IMR-90 (cell line): ENCODE measurements at regions of chr1 and their contacts with region 1.

Region 1: GRCh38 chr1:164617377-164618201 is 58.6 kb downstream of the PBX1 start:
- DNase-seq: peak; percentile 42
- ATAC-seq: peak; percentile 72
- H3K4me3 ChIP-seq: no peak overlapping the region
- H3K27ac ChIP-seq: no peak overlapping the region
- H3K4me1 ChIP-seq: peaks cover 13% of the 10 kb centered on the region; the same call in 1 of the 2 replicates
- H3K27me3 ChIP-seq: no peaks in the 10 kb centered on the region
- CTCF ChIP-seq: peak; percentile 63
- POLR2A ChIP-seq: no peak
- RAD21 ChIP-seq: peak; percentile 86

Region 2: DNA sequence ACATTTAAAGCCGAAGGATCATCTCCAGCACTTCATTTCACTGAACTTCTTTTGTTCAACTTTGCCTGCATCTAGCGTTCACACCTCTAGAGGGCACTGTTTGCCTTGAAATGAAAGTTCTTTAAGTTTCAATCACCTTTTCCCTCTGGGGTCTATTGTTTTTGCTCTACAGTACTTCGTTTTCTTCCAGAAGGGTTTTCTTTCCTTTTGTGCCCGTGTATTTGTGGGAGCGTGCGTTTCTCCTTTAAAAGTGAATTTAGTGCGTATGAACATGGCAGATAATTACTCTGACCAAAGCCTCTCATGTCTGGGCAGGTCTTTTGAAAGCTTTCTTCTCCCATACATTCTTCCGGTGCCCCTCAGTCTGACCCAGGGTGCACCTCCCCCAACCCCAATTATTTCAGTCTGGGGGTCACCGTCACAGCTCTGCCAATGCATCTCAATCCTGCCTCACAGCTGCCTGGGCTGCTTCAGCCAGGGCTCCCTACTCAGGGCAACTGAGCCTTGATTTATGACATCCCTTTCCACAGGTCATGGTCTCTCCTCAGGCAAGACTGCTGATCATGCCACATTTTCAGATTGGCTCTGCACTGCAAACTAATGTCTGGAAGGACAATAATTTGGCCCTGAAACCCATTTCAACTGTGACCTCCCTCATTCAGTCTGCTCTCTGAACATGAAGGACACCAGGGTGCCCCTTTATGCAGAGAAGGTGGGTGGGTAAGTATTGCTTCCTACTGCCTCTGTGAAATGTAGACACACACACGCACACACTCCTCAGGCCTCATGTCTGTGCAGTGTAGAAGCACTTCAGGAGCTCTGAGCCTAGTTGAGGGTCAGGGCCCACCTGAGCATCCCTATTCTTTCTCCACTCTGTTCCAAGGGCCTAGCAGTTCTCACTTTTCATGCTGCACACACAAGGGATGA is 1207.3 kb before region 1 on chr1:
- CTCF ChIA-PET with region 1: no interaction called
- POLR2A ChIA-PET with region 1: no interaction called
- dilution Hi-C with region 1: no loop called
- in situ Hi-C with region 1: no loop called
- intact Hi-C with region 1: loop called (anchors 10 kb)
- DNase-seq: peak; percentile 56
- ATAC-seq: peak; percentile 81
- H3K4me3 ChIP-seq: no peak overlapping the region
- H3K27ac ChIP-seq: no peak overlapping the region
- H3K4me1 ChIP-seq: no peaks in the 10 kb centered on the region
- H3K27me3 ChIP-seq: peaks cover 5% of the 10 kb centered on the region
- CTCF ChIP-seq: peak; percentile 75
- POLR2A ChIP-seq: no peak
- RAD21 ChIP-seq: peak; percentile 72

Region 3: GRCh38 chr1:164101802-164102201 is 515.8 kb before region 1 on chr1:
- CTCF ChIA-PET with region 1: no interaction called
- POLR2A ChIA-PET with region 1: no interaction called
- dilution Hi-C with region 1: no loop called
- in situ Hi-C with region 1: no loop called
- intact Hi-C with region 1: no loop called
- DNase-seq: no peak
- ATAC-seq: no peak
- H3K4me3 ChIP-seq: no peak overlapping the region
- H3K27ac ChIP-seq: no peak overlapping the region
- H3K4me1 ChIP-seq: no peaks in the 10 kb centered on the region
- H3K27me3 ChIP-seq: no peaks in the 10 kb centered on the region
- CTCF ChIP-seq: no peak
- POLR2A ChIP-seq: no peak
- RAD21 ChIP-seq: no peak

Region 4: DNA sequence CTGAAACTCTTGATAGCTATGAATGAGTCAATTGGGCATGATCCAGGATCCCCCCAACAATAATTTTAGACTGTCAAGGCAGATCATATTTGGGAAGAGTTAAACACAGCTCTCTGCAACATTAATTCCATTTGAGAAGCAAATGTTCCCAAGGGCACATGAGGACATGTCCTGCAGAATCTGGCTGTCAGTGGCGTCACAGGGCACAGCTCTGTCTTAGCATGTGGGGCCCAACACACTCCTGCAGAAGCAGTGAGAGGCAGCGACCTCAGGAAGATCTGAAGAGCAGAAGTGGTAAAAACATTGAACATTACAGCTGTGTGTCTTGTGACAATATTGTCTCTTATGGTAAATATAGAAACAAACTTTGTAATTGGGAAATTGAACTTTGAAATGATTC is 255.7 kb before region 1 on chr1:
- CTCF ChIA-PET with region 1: no interaction called
- POLR2A ChIA-PET with region 1: no interaction called
- dilution Hi-C with region 1: no loop called
- in situ Hi-C with region 1: no loop called
- intact Hi-C with region 1: no loop called
- DNase-seq: no peak
- ATAC-seq: no peak
- H3K4me3 ChIP-seq: no peak overlapping the region
- H3K27ac ChIP-seq: no peak overlapping the region
- H3K4me1 ChIP-seq: no peaks in the 10 kb centered on the region
- H3K27me3 ChIP-seq: no peaks in the 10 kb centered on the region
- CTCF ChIP-seq: no peak
- POLR2A ChIP-seq: no peak
- RAD21 ChIP-seq: no peak

Region 5: DNA sequence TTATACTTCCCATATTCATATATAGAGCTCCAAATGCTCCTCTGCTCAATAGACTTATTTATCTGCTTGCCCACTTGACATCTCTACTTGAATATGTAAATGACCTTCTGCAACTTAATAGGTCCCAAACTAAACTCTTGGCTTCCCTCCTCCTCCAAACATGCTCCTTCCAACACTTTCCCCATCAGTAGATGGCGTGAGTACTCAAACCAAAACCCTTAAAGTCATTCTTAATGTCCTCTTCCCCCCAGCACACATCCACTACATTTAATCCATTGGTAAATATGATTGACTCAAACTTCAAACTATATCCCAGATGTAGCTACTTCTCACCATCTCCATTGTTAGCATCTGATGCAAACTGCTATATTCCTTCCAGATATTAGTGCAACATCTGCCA is 107.2 kb before region 1 on chr1:
- CTCF ChIA-PET with region 1: interaction called, 4 read pairs
- POLR2A ChIA-PET with region 1: no interaction called
- dilution Hi-C with region 1: no loop called
- in situ Hi-C with region 1: no loop called
- intact Hi-C with region 1: loop called (anchors 5 kb)
- DNase-seq: peak; percentile 33
- ATAC-seq: peak; percentile 56
- H3K4me3 ChIP-seq: no peak overlapping the region
- H3K27ac ChIP-seq: no peak overlapping the region
- H3K4me1 ChIP-seq: no peaks in the 10 kb centered on the region
- H3K27me3 ChIP-seq: no peaks in the 10 kb centered on the region; the same call in 1 of the 2 replicates
- CTCF ChIP-seq: peak; percentile 45
- POLR2A ChIP-seq: no peak
- RAD21 ChIP-seq: peak; percentile 41